ENCODE measurements at regions of chr15 and their contacts with region 1.

Region 1: DNA sequence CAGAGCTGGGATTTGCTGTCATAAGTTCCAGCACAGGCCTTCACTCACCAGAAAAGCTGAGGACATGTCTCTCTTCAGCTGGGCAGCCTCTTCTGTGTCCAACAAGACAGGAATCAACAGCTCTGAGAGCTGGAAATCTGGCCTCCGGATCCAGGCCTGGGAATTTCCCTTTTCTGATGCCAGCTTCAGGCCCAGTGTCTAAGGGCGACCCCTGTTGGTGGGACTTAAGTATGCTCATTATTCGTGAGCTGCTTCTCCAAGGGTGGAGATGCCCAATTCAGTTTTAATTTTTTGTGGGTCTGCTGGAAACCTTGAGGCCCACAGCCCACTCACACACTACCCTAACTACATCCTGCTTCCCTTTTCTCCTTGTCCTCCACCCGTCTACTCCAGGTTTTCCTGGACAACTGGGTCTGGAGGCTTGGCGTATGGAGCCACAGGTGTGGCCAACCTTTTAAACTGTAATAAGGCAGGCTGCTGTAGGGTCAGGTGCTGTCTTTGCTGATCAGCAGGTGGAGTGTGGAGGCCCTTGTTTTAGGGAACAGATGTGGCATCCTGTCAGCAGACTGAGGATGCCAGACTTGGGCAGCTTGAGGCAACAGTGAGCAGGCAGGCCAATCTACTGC is 2.6 kb upstream of the CEMIP start:
- DNase-seq: peak; percentile 71
- ATAC-seq: no peak
- H3K4me3 Mint-ChIP-seq: no peak overlapping the region
- H3K27ac Mint-ChIP-seq: no peak overlapping the region
- H3K4me1 Mint-ChIP-seq: peaks cover 10% of the 10 kb centered on the region
- H3K27me3 Mint-ChIP-seq: peaks cover 52% of the 10 kb centered on the region

Region 2: DNA sequence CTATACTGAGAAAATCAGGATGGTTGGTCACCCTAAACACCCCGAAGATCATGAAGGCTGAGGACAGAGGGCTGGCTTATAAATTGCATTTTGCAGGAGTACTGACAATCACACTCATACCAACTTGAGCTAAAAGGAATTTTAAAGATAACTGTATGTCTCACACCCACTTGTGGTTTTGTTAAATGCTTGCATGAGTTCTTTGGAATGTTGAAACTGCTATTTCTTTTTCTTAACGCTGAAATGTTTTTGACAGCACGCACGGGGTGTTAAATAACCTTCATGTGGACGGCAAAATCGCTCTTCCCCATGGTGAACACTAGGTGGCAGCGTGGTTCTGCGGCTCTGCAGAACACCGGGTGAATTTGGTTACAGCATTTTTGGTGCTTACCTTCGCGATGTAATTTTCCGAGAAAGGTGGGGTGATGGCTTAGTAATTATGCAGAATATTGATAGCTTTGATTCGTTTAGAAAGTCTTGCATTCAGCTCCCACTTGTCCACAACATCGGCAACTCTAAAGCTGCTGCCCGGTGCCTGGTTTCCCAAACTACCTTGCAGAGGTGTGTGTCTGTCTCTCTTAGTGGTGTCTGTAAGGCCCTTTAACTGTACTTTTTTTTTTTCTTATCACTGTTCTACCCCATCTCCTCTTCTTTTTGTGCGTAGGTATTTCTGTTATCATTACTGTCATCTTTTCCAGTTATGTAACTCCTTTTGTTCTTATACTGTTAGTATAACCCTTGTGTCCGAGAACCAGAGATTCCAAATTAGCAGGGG is 320.7 kb before region 1 on chr15:
- CTCF ChIA-PET with region 1: interaction called, 83 read pairs
- DNase-seq: peak; percentile 67
- ATAC-seq: peak; percentile 67
- H3K4me3 Mint-ChIP-seq: no peak overlapping the region
- H3K27ac Mint-ChIP-seq: no peak overlapping the region
- H3K4me1 Mint-ChIP-seq: peaks cover 5% of the 10 kb centered on the region
- H3K27me3 Mint-ChIP-seq: peaks cover 35% of the 10 kb centered on the region

Region 3: DNA sequence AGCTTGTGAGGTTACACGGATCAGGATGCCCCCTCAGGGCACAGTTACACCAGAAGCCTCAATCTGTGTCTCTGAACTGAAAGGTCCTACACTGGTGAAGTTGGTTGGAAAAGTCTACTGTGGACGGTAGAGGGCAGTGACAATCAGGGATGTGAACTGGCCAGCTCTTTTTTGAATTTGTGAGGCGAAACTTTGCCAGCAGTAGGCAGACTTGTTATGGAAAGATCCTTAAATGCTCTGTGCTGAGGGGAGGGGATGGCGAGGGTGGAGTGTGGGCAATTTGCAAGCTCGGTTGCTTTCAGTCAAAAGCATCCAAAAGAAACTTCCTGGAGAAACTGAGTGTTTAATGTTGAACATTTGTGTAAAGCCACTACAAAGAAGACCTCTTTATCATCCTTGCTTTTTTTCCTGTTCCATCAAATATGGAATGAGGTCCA is 208.8 kb before region 1 on chr15:
- CTCF ChIA-PET with region 1: interaction called, 34 read pairs
- DNase-seq: no peak
- ATAC-seq: peak; percentile 33
- H3K4me3 Mint-ChIP-seq: no peak overlapping the region
- H3K27ac Mint-ChIP-seq: no peak overlapping the region
- H3K4me1 Mint-ChIP-seq: peaks cover 12% of the 10 kb centered on the region
- H3K27me3 Mint-ChIP-seq: peaks cover 18% of the 10 kb centered on the region

Region 4: DNA sequence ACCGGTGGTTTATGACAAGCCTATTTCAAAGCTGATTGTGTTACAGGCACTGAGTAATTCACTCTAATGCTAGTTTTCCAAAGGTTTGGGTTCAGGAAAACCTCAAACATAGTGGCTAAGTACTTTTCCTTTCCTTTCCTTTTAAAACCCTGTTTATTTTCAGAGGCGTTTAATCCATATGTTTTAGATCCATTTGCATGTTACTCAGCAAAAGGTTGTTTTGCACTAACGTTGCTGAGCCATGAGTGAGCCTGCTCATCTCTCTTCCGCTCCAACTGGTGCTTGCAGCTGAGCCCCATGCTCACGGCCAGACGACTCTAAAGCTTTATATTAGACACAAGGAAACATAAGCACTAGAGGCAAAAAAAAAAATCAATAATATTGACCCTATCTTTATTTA is 12.0 kb after region 1 on chr15:
- CTCF ChIA-PET with region 1: interaction called, 19 read pairs
- DNase-seq: no peak
- ATAC-seq: no peak
- H3K4me3 Mint-ChIP-seq: no peak overlapping the region
- H3K27ac Mint-ChIP-seq: no peak overlapping the region
- H3K4me1 Mint-ChIP-seq: peaks cover 8% of the 10 kb centered on the region
- H3K27me3 Mint-ChIP-seq: peaks cover 39% of the 10 kb centered on the region

Region 5: DNA sequence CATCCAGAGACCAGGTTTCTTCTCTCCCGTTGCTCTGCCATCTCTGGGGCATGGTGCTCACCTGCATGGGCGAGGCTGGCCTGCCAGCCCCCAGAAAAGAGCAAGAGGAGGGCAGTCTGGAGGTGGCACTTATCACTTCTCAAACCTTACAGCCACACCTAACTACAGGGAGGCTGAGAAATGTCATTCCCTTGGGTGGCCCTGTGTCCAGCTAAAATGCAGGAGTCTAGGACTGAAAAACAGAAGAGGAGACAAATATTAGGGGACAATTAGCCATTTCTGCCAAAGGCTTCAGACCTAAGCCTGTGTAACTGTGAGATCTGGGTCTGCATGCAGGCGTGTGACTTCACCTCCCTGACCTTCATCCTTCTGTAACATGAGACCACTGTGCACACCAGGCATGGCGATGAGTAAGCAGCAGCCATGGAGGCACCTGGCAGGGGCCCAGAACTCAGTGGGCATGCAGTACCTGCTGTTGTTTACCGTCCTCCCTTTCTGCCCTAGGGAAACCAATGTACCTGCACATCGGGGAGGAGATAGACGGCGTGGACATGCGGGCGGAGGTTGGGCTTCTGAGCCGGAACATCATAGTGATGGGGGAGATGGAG is 129.7 kb after region 1 on chr15:
- CTCF ChIA-PET with region 1: no interaction called
- DNase-seq: no peak
- ATAC-seq: no peak
- H3K4me3 Mint-ChIP-seq: no peak overlapping the region
- H3K27ac Mint-ChIP-seq: no peak overlapping the region
- H3K4me1 Mint-ChIP-seq: no peaks in the 10 kb centered on the region
- H3K27me3 Mint-ChIP-seq: no peaks in the 10 kb centered on the region

Region 6: GRCh38 chr15:80970018-80970658 is 193.6 kb after region 1 on chr15:
- CTCF ChIA-PET with region 1: interaction called, 21 read pairs
- DNase-seq: peak; percentile 61
- ATAC-seq: peak; percentile 57
- H3K4me3 Mint-ChIP-seq: no peak overlapping the region
- H3K27ac Mint-ChIP-seq: no peak overlapping the region
- H3K4me1 Mint-ChIP-seq: peaks cover 3% of the 10 kb centered on the region
- H3K27me3 Mint-ChIP-seq: no peaks in the 10 kb centered on the region

Measured in activated CD8-positive, alpha-beta memory T cell treated with anti-CD3 and anti-CD28 coated beads, Interleukin-2, amount 10 ng/mL, durations not matched to agents 7 days and 5 days (primary cell).